Dorsolateral prefrontal cortex (tissue), 120 donors: ENCODE measurements at regions of chr20 and their contacts with region 1.

Region 1: GRCh38 chr20:61014491-61014890 is 237.6 kb upstream of the CDH4 start:
- DNase-seq: no peak
- H3K4me3 ChIP-seq: no peak overlapping the region
- H3K27ac ChIP-seq: no peak overlapping the region
- H3K27me3 ChIP-seq: peaks cover 0 to 41% (median 9%) of the 10 kb centered on the region in 45 donors
- CTCF ChIP-seq: no peak

Region 2: GRCh38 chr20:60993433-60994044 is 21.0 kb before region 1 on chr20:
- intact Hi-C with region 1: loop called in 1 of 2 experiments (anchors 1 kb)
- DNase-seq: no peak
- H3K4me3 ChIP-seq: no peak overlapping the region
- H3K27ac ChIP-seq: no peak overlapping the region
- H3K27me3 ChIP-seq: peaks cover 0 to 40% (median 3%) of the 10 kb centered on the region in 45 donors
- CTCF ChIP-seq: peak in 2 of 56 donors; percentile 11 to 16